Aorta (tissue), 5 donors: ENCODE measurements at regions of chr10 and their contacts with region 1.

Region 1: DNA sequence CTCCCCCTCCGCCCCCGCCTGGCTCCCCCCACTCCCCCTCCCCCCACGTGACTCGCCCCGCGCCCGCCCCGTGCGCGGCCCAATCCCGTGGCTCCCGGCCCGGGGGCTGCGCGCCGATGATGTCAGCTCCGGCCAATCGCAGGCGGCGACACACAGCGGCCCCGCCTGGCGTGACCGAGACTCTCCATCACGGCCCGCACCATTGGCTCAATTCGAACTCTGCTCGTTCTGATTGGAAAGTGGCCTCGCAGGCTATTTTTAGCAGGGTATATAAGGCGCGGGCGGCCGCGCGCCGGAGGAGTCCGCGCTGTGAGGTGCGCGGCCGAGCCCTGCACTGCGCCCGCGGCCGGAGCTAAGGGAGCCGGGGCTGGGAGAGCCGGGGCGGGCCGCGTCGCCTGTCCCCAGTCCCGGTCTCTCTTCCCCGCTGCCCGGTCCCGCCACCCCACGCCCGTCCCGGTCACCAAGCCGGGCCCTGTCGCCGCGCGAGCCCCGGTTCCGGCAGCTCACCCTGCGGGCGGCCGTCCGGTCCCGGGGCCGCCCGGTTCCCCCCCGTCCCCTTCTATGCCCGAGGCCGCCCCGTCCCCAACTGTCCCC is 345 bp upstream of the KLF6 start:
- DNase-seq: peak; percentile 99 to 100
- ATAC-seq: peak; percentile 93
- H3K4me3 ChIP-seq: peak overlapping the region; percentile 79 to 92
- H3K27ac ChIP-seq: peak overlapping the region; percentile 87 to 99
- H3K4me1 ChIP-seq: no peaks in the 10 kb centered on the region
- H3K27me3 ChIP-seq: no peaks in the 10 kb centered on the region

Region 2: GRCh38 chr10:3197348-3198003 is 587.9 kb before region 1 on chr10:
- intact Hi-C with region 1: loop called in 1 of 2 experiments (anchors 5 kb)
- DNase-seq: peak; percentile 87 to 94
- ATAC-seq: peak; percentile 94
- H3K4me3 ChIP-seq: no peak overlapping the region
- H3K27ac ChIP-seq: peak overlapping the region in 1 of 2 donors; percentile 22
- H3K4me1 ChIP-seq: no peaks in the 10 kb centered on the region
- H3K27me3 ChIP-seq: no peaks in the 10 kb centered on the region

Region 3: GRCh38 chr10:3852147-3852904 is 67.0 kb after region 1 on chr10:
- intact Hi-C with region 1: loop called in 1 of 2 experiments (anchors 2 kb)
- DNase-seq: peak; percentile 84 to 85
- ATAC-seq: peak; percentile 92
- H3K4me3 ChIP-seq: no peak overlapping the region
- H3K27ac ChIP-seq: peak overlapping the region; percentile 20 to 73
- H3K4me1 ChIP-seq: peaks cover 0 to 5% of the 10 kb centered on the region in 2 donors
- H3K27me3 ChIP-seq: no peaks in the 10 kb centered on the region

Region 4: DNA sequence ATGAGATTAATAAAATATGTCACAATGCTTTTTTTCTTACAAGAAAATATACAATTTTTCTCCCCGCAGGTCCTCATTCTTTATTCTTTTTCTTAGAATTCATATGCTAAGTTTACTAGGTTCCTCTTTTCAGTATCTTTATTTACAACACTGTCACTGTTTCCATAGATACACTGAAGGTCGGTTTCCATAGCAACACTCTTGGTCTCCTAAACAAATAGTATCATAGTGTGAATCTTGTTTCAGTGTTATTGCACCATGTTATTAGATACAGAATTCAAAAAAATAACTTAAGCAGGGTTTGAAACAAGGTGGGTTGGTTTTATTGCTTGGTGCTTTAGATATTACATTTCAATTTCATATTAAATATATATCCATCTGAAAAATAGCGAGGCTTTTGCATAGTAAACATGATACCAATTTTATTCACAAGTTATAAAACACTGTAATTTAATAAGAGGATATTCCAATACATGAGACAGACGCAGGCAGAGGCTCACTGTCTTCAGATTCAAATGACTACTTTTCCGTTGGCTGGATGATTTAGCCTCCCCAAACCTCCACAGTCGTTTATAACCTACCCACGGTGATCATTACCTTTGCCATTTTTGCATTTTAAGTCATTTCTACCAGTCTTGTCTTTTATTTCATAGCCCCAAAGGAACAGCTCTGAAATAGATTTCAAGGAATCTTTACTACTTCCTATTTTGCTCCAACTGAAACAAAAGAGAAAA is 88.5 kb after region 1 on chr10:
- intact Hi-C with region 1: no loop called
- DNase-seq: no peak
- ATAC-seq: peak; percentile 77
- H3K4me3 ChIP-seq: no peak overlapping the region
- H3K27ac ChIP-seq: no peak overlapping the region
- H3K4me1 ChIP-seq: peaks cover 0 to 3% of the 10 kb centered on the region in 2 donors
- H3K27me3 ChIP-seq: peaks cover 0 to 1% of the 10 kb centered on the region in 2 donors

Region 5: DNA sequence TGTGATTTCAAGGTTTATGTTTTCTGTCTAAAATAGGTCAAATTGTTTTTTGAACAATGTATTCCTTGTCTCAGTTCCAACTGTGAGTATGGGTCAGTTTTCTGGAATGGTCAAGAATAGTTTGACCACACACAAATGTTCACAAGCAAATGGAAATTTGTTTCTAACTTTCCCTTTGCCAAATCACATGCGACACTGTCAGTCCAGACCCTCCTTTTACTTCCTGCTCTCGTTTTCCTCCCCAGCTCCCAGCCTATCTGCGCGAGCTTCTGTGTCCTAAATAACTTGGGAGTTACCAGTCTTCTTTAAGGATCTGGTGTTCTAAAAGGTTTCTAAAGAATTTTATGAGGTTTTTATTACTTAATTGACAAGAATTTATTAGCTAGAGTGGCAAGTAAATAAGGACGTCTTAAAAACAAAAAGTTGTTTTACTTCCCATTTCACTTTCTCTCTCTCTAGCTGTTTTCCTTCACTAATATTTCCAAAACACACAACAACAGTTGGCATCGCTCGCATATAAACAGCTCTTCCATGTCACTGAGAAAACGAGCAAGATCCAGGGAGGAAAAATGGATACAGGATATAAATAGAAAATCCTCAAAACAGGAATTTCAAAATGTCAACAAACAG is 265.8 kb after region 1 on chr10:
- intact Hi-C with region 1: loop called in 1 of 2 experiments (anchors 10 kb)
- DNase-seq: peak in 1 of 2 donors; percentile 65
- ATAC-seq: peak; percentile 78
- H3K4me3 ChIP-seq: peak overlapping the region; percentile 4 to 8
- H3K27ac ChIP-seq: peak overlapping the region; percentile 26 to 52
- H3K4me1 ChIP-seq: peaks cover 0 to 6% of the 10 kb centered on the region in 2 donors
- H3K27me3 ChIP-seq: no peaks in the 10 kb centered on the region

Region 6: DNA sequence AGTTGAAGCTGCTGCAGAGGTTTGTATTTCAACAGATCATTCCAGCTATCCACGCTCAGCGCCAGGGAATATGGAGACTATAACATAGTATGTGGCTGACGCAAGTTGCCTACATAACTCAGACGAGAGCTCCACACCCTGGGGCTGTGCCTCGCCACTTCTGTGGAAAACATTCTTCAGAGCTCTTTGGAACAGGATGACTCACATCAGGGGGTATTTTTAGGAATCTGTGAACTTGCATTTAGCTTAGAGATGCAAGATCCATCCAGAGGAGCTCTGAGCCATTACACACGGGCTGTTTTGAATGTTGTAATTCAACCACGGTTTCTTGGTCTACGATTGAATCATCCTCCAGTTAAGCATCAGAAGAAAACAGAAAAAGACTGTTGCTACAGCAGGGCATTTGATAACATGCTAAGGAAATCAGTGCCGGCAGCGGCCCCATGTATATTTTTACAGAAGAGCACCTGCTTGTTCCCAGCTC is 559.2 kb after region 1 on chr10:
- intact Hi-C with region 1: loop called in 1 of 2 experiments (anchors 10 kb)
- DNase-seq: peak; percentile 88 to 89
- ATAC-seq: peak; percentile 84
- H3K4me3 ChIP-seq: no peak overlapping the region
- H3K27ac ChIP-seq: peak overlapping the region; percentile 48 to 96
- H3K4me1 ChIP-seq: no peaks in the 10 kb centered on the region
- H3K27me3 ChIP-seq: no peaks in the 10 kb centered on the region

Region 7: DNA sequence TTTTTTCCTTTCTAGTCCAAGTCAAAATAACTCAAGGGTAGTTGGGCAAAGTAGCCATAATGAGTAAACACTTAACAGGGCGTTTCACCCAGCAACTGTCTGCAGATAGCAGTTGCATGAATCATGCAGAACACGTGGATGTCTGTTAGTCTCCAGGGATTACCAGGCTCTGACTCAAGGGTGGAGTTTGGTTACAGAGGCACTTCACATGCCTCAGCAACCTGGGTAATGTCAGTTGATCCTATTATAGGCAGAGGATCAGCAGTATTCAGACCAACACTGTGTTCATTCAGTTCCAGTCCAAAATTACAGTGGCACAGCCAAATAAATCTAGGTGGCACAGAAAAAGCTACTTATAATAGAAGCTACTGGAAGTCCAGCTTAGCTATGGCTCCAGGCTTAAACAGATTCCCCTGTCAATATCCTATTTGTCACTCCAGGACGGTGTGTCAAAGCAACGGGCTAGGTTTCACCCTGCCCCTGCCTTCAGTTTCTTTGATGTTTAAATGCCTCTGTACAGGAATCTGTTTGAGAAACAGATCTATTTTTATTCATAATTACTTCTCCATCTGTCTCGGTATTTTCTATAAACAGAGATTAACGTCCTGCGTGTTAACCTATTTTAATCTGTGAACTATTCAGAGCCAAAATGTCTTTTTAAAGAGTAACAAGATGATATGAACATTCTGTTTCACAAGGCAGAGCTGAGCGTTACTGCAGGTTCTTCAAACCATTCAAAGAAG is 878.0 kb after region 1 on chr10:
- intact Hi-C with region 1: loop called in 1 of 2 experiments (anchors 5 kb)
- DNase-seq: peak in 1 of 2 donors; percentile 67
- ATAC-seq: peak; percentile 93
- H3K4me3 ChIP-seq: peak overlapping the region in 1 of 2 donors; percentile 10
- H3K27ac ChIP-seq: peak overlapping the region; percentile 89 to 95
- H3K4me1 ChIP-seq: peaks cover 0 to 7% of the 10 kb centered on the region in 2 donors
- H3K27me3 ChIP-seq: no peaks in the 10 kb centered on the region